HepG2 (cell line): ENCODE measurements at regions of chr4 and their contacts with region 1.

Region 1: DNA sequence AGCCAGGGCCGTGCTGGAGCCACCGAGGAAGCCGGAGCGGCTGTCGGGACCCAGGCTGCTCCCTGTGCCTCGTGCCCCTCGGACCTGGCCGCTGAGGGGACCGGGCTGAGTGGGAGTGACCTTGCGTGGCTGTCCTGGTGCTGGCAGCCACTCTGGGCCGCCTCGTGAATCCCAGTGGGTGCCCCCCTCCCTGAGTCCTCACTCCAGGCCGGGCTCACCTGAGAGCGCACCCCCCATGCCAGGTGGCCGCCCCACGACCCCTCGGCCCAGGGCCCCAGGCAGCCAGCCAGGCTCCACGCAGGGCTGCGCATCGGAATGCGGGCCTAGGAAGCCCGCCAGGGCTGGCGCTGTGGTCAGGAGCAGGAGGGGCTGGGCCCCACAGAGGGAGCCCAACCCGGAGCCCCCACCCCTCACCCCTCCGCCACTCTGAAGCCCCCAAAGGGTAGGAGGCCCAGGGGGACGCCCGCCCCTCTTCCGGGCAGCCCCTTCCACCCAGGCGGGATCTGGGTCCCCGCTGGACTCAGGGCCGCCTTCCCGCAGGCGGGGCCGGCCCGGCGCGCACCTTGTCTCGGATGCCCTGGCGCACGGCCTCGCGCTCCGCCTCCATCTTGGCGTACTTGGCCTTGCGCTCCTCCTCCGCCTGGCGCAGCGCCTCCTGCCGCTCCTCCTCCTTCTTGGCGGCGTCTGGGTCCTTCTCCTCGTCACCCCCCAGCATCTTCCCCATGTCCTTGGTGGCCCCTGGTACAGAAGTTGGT is 33.9 kb downstream of the CPLX1 start:
- DNase-seq: no peak
- ATAC-seq: no peak
- H3K4me3 ChIP-seq: no peak overlapping the region; a peak in 1 of 6 replicates
- H3K27ac ChIP-seq: no peak overlapping the region
- H3K4me1 ChIP-seq: peaks cover 27% of the 10 kb centered on the region
- H3K27me3 ChIP-seq: peaks cover 19 to 92% of the 10 kb centered on the region in 2 experiments
- CTCF ChIP-seq: no peak
- EP300 ChIP-seq: no peak
- POLR2A ChIP-seq: no peak
- RAD21 ChIP-seq: no peak

Region 2: GRCh38 chr4:781493-782216 is 10.4 kb before region 1 on chr4:
- CTCF ChIA-PET with region 1: no interaction called
- POLR2A ChIA-PET with region 1: interaction called, 27 read pairs
- in situ Hi-C with region 1: no loop called
- intact Hi-C with region 1: no loop called
- DNase-seq: peak; percentile 97
- ATAC-seq: peak; percentile 92
- H3K4me3 ChIP-seq: peak overlapping the region; percentile 87 to 99 (median 94)
- H3K27ac ChIP-seq: peak overlapping the region; percentile 94
- H3K4me1 ChIP-seq: peaks cover 59% of the 10 kb centered on the region
- H3K27me3 ChIP-seq: no peaks in the 10 kb centered on the region; a peak in 1 of 5 replicates
- CTCF ChIP-seq: no peak
- EP300 ChIP-seq: no peak
- POLR2A ChIP-seq: peak in 1 of 2 experiments; percentile 95; a peak in 2 of 4 replicates
- RAD21 ChIP-seq: 0 out of 2 replicates have a peak, but pooled peaks have one; percentile 46

Region 3: DNA sequence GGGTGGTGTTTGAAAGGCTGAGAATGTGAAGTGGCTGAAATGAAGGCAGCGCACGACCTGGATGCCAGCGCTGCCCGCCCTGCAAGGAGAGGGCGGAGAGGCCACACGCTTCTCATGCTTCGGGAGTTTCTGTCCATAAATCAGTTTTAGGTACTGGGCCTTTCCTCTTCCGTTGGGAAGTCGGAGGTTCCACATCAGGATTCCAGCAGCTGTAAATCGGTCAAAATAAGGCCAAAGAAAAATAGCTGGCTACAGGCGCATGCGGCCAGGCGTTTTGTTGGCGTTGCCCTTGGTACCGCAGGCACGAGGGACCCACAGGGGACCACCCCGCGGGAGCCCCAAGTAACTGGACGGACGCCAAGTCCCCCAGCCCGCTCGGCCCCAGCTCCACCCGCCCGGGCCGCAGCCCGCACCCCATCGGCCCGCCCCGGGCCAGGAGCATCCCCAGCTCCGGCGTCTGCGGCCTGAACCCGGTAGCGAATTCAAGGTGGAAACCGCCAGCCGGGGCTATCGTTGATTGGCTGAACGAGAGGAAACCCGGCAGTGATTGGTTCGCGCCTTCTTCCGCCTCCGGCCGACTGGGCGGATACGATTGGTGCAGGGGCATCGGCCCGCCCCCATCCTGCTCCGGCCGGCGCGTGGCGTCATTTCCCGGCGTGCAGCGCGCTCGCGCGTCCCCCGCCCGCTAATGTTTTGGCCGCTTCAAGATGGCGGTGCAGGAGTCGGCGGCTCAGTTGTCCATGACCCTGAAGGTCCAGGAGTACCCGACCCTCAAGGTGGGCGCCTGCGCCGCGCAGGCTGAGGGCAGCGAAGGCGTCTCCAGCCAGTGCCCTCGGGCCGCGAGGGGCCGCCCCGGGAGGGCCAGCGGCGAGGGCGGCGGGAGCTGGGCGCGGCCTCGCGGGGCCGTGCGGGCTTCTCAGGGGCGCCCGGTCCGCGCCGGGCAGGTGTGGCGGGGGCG is 497.4 kb after region 1 on chr4 and contains the start of gene MAEA:
- CTCF ChIA-PET with region 1: no interaction called
- POLR2A ChIA-PET with region 1: no interaction called
- in situ Hi-C with region 1: no loop called
- intact Hi-C with region 1: no loop called
- DNase-seq: peak; percentile 92
- ATAC-seq: peak; percentile 90
- H3K4me3 ChIP-seq: peak within 1 kb of the TSS; percentile 81 to 94 (median 84)
- H3K27ac ChIP-seq: peak within 1 kb of the TSS; percentile 72
- H3K4me1 ChIP-seq: peaks cover 50% of the 10 kb centered on the region
- H3K27me3 ChIP-seq: no peaks in the 10 kb centered on the region; a peak in 1 of 5 replicates
- CTCF ChIP-seq: no peak
- EP300 ChIP-seq: 0 out of 4 replicates have a peak, but pooled peaks of 1 of the 2 experiments have one; percentile 16
- POLR2A ChIP-seq: peak; percentile 69 to 76
- RAD21 ChIP-seq: no peak
- total RNA-seq, gene MAEA: 52.0 and 65.2 TPM in 2 replicates